Activated CD4-positive, alpha-beta T cell treated with anti-CD3 and anti-CD28 coated beads for 36 hours (primary cell): ENCODE measurements at regions of chr16 and their contacts with region 1.

Region 1: GRCh38 chr16:22642416-22643088 is 131.9 kb downstream of the NPIPB5 start:
- DNase-seq: no peak
- ATAC-seq: no peak
- H3K4me3 Mint-ChIP-seq: no peak overlapping the region
- H3K27ac Mint-ChIP-seq: no peak overlapping the region
- H3K4me1 Mint-ChIP-seq: no peaks in the 10 kb centered on the region
- H3K27me3 Mint-ChIP-seq: no peaks in the 10 kb centered on the region

Region 2: DNA sequence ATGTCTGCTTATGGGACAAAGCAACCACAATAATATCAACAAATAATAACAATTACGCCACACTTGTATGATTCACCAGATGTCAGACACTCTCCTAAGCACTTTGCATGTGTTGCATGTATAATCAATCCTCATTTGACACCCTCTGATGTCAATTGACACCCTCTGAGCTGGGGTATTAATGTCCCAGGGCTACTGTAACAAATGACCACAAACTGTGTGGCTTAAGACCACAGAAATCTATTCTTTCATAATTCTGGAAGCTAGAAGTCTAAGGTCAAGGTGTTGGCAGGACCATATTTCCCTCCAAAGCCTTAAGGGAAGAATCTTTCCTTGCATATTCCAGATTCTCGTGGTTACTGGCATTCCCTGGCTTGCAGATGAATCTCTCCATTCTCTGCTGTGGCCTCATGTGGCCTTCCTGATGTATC is 19.2 kb before region 1 on chr16:
- CTCF ChIA-PET with region 1: interaction called, 3 read pairs
- POLR2A ChIA-PET with region 1: no interaction called
- intact Hi-C with region 1: loop called in 1 of 2 experiments (anchors 2 kb)
- DNase-seq: no peak
- ATAC-seq: no peak
- H3K4me3 Mint-ChIP-seq: no peak overlapping the region
- H3K27ac Mint-ChIP-seq: no peak overlapping the region
- H3K4me1 Mint-ChIP-seq: no peaks in the 10 kb centered on the region
- H3K27me3 Mint-ChIP-seq: no peaks in the 10 kb centered on the region